Right cardiac atrium (tissue), 5 donors: ENCODE measurements at regions of chr1 and their contacts with region 1.

Region 1: DNA sequence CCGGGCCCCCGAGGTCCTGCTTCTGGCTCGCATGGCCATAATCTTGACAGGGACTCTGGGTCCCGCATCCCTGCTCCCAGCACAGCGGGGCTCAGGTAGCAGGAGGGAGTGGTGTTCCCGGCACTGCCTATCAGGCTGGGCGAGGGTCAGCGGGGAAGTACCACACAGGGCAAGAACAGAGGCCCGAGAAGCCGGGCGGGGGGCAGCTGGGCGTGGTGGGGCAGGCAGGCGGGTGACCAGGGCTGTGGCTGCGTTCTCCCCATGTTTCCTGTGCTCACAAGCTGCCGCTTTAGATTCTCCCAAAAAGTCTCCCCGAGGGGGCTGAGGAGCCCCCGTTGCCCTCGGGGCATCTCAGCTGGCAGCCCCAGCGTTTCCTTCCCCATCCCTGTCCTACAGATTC is 18.3 kb downstream of the ATAD3B start:
- DNase-seq: no peak
- ATAC-seq: no peak
- H3K4me3 ChIP-seq: no peak overlapping the region
- H3K27ac ChIP-seq: no peak overlapping the region
- H3K4me1 ChIP-seq: no peaks in the 10 kb centered on the region
- H3K27me3 ChIP-seq: no peaks in the 10 kb centered on the region

Region 2: GRCh38 chr1:1441002-1441888 is 48.6 kb before region 1 on chr1:
- intact Hi-C with region 1: loop called in 1 of 4 experiments (anchors 5 kb)
- DNase-seq: peak; percentile 57 to 87 (median 83)
- ATAC-seq: peak; percentile 73 to 74
- H3K4me3 ChIP-seq: no peak overlapping the region
- H3K27ac ChIP-seq: no peak overlapping the region
- H3K4me1 ChIP-seq: no peaks in the 10 kb centered on the region
- H3K27me3 ChIP-seq: no peaks in the 10 kb centered on the region